GM10248 (cell line): ENCODE measurements at regions of chr17 and their contacts with region 1.

Region 1: DNA sequence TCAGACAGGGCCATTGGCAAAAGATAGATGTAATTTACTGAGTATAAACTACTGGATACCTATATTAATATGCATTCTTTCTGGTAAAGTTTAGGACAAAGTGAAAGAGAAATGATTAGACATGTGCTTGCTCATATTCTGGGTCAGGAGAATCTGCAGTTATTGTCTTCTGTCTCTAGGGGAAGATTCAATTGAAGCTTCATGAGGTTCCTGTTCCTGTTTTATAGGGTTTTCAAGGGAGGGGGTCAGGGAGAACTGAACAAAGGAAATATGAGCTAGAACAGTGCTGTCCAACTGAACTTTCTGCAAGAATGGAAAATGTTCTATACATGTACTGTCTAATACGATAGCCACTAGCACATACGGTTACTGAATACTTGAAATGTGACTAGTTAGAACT is 59.3 kb upstream of the CORO6 start:
- DNase-seq: peak; percentile 35
- CTCF ChIP-seq: no peak

Region 2: GRCh38 chr17:28925912-28926365 is 756.1 kb before region 1 on chr17:
- CTCF ChIA-PET with region 1: no interaction called
- POLR2A ChIA-PET with region 1: no interaction called
- DNase-seq: peak; percentile 51
- CTCF ChIP-seq: no peak

Region 3: GRCh38 chr17:29653995-29654714 is 27.9 kb before region 1 on chr17:
- CTCF ChIA-PET with region 1: no interaction called
- POLR2A ChIA-PET with region 1: no interaction called
- DNase-seq: no peak
- CTCF ChIP-seq: no peak

Region 4: GRCh38 chr17:29664743-29665480 is 17.1 kb before region 1 on chr17:
- CTCF ChIA-PET with region 1: interaction called, 28 read pairs
- POLR2A ChIA-PET with region 1: no interaction called
- DNase-seq: peak; percentile 37
- CTCF ChIP-seq: no peak

Region 5: GRCh38 chr17:29802246-29802645 is 120.2 kb after region 1 on chr17:
- CTCF ChIA-PET with region 1: no interaction called
- POLR2A ChIA-PET with region 1: no interaction called
- DNase-seq: no peak
- CTCF ChIP-seq: no peak